ENCODE measurements at regions of chr1 and their contacts with region 1.

Region 1: GRCh38 chr1:177137814-177138213 is 26.7 kb downstream of the ASTN1 start:
- DNase-seq: no peak
- H3K4me3 ChIP-seq: no peak overlapping the region
- H3K27ac ChIP-seq: no peak overlapping the region
- H3K4me1 ChIP-seq: no peaks in the 10 kb centered on the region
- H3K27me3 ChIP-seq: no peaks in the 10 kb centered on the region
- CTCF ChIP-seq: no peak
- POLR2A ChIP-seq: no peak

Region 2: GRCh38 chr1:175355420-175356065 is 1782.3 kb before region 1 on chr1:
- intact Hi-C with region 1: loop called (anchors 5 kb)
- DNase-seq: no peak
- H3K4me3 ChIP-seq: no peak overlapping the region
- H3K27ac ChIP-seq: no peak overlapping the region
- H3K4me1 ChIP-seq: no peaks in the 10 kb centered on the region
- H3K27me3 ChIP-seq: no peaks in the 10 kb centered on the region
- CTCF ChIP-seq: no peak
- POLR2A ChIP-seq: no peak

Region 3: GRCh38 chr1:177629526-177629925 is 491.7 kb after region 1 on chr1:
- intact Hi-C with region 1: no loop called
- DNase-seq: no peak
- H3K4me3 ChIP-seq: no peak overlapping the region
- H3K27ac ChIP-seq: no peak overlapping the region
- H3K4me1 ChIP-seq: no peaks in the 10 kb centered on the region
- H3K27me3 ChIP-seq: no peaks in the 10 kb centered on the region
- CTCF ChIP-seq: no peak
- POLR2A ChIP-seq: no peak

Measured in breast epithelium (tissue), 4 donors.